ENCODE measurements at regions of chr3 and their contacts with region 1.

Region 1: DNA sequence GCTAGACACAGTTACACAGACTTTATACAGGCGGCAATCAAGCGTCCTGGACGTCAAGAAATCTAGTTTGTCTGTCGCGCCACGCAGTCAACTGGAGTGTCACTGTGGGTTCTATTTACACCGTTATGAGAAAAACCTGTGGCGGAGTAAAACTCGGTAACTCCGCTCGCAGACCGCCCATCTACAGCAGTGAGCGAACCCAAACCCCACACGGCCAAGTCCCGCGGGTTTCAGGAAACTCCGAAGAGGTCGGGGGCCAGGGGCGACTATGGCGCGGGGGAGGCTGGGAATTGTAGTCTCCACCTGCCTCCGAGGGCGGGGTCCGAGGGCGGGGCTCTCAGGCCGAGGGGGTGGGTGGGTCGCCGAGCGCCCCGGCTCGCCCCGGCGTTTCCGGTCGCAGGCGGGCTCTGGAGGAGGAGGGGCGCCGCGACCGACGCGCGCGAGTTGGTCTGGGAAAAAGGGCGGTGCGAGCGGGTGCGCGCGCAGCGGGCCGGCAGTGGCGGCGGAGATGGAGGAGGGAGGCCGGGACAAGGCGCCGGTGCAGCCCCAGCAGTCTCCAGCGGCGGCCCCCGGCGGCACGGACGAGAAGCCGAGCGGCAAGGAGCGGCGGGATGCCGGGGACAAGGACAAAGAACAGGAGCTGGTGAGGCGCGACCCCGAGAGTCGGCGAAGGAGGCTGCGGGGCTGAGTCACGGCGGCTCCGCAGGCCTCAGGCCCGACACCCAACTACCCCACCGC is at the start of gene PSMD2:
- DNase-seq: peak; percentile 98
- total RNA-seq, gene PSMD2: 217 TPM

Region 2: DNA sequence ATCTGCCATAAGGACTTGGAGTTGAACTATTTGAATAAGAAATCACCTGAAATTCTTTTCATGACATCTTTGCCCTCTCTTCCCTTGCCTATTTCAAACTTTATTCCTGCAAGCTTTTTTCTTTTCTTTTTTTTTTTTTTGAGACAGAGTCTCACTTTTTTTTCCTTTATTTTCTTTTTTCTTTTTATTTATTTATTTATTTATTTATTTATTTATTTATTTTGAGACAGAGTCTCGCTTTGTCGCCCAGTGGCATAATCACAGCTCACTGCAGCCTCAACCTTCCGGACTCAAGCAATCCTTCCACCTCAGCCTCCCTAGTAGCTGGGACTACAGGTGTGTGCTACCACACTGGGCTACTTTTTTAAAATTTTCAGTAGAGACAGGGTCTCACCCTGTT is 1874.9 kb before region 1 on chr3:
- intact Hi-C with region 1: no loop called
- DNase-seq: no peak

Region 3: GRCh38 chr3:184185461-184186308 is 113.2 kb before region 1 on chr3 and contains the start of gene ABCF3:
- intact Hi-C with region 1: loop called (anchors 5 kb)
- DNase-seq: peak; percentile 100
- total RNA-seq, gene ABCF3: 61.5 TPM

Region 4: GRCh38 chr3:184314363-184314699 is 15.4 kb after region 1 on chr3 and contains the start of gene EIF4G1:
- intact Hi-C with region 1: loop called (anchors 1 kb)
- DNase-seq: peak; percentile 97
- total RNA-seq, gene EIF4G1: 284 TPM